ENCODE measurements at regions of chr20 and their contacts with region 1.

Region 1: GRCh38 chr20:44609511-44610312 is 27.3 kb downstream of the PKIG start:
- DNase-seq: peak; percentile 71 to 93 (median 87)
- ATAC-seq: peak; percentile 80
- H3K4me3 ChIP-seq: peak overlapping the region in 1 of 2 experiments; percentile 5
- H3K4me3 Mint-ChIP-seq: peak overlapping the region; percentile 53
- H3K27ac ChIP-seq: peak overlapping the region; percentile 69 to 83
- H3K27ac Mint-ChIP-seq: peak overlapping the region; percentile 98
- H3K4me1 ChIP-seq: peaks cover 48% of the 10 kb centered on the region
- H3K4me1 Mint-ChIP-seq: peaks cover 39% of the 10 kb centered on the region
- H3K27me3 ChIP-seq: no peaks in the 10 kb centered on the region
- H3K27me3 Mint-ChIP-seq: no peaks in the 10 kb centered on the region
- CTCF ChIP-seq: peak; percentile 92

Region 2: DNA sequence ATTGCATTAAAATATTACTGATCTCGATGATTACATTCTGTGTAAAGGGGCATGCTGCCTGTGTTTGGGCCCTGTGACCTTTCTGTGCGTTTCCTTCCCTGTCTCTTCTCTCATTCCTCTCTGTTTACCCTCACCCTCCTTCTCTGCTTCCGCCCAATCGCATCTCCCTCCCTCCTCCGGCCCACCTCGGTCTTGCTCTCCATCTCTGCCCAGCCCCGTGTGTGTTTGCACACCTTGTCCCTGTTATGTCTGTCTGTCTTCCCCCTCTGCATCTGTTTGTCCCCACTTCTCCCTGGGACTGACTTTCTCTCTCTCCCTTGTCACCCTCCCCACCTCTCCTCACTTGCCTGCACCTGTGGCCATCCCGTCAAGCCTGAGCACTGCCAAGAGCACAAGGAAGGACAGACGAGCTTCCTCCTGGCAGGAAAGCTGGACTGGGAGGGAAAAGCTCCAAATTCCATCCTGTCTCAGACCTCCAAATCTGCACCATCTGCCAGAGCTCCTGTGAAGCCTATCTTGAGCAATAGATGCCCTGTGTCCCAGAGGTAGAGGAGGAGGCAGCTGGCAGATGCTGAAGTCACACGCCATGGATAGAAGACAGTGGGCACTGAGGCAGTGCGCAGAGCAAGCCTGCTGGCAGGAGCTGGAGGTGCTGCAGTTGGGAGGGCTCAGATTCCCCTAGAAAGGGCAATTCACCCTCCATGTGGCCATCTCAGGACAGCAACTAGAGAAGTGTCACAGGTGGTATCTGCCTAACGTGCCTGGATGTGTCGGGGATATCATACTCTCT is 1592.3 kb before region 1 on chr20:
- CTCF ChIA-PET with region 1: no interaction called
- POLR2A ChIA-PET with region 1: no interaction called
- intact Hi-C with region 1: no loop called
- DNase-seq: no peak
- ATAC-seq: no peak
- H3K4me3 ChIP-seq: no peak overlapping the region
- H3K4me3 Mint-ChIP-seq: no peak overlapping the region
- H3K27ac ChIP-seq: no peak overlapping the region
- H3K27ac Mint-ChIP-seq: no peak overlapping the region
- H3K4me1 ChIP-seq: no peaks in the 10 kb centered on the region
- H3K4me1 Mint-ChIP-seq: no peaks in the 10 kb centered on the region
- H3K27me3 ChIP-seq: no peaks in the 10 kb centered on the region
- H3K27me3 Mint-ChIP-seq: peaks cover 4% of the 10 kb centered on the region
- CTCF ChIP-seq: no peak

Region 3: GRCh38 chr20:44382641-44383040 is 227.1 kb before region 1 on chr20:
- CTCF ChIA-PET with region 1: interaction called, 23 read pairs
- POLR2A ChIA-PET with region 1: interaction called, 3 read pairs
- intact Hi-C with region 1: loop called (anchors 1 kb)
- DNase-seq: no peak
- ATAC-seq: no peak
- H3K4me3 ChIP-seq: no peak overlapping the region
- H3K4me3 Mint-ChIP-seq: no peak overlapping the region
- H3K27ac ChIP-seq: no peak overlapping the region
- H3K27ac Mint-ChIP-seq: no peak overlapping the region
- H3K4me1 ChIP-seq: no peaks in the 10 kb centered on the region
- H3K4me1 Mint-ChIP-seq: peaks cover 1% of the 10 kb centered on the region
- H3K27me3 ChIP-seq: no peaks in the 10 kb centered on the region
- H3K27me3 Mint-ChIP-seq: peaks cover 15% of the 10 kb centered on the region
- CTCF ChIP-seq: no peak

Region 4: DNA sequence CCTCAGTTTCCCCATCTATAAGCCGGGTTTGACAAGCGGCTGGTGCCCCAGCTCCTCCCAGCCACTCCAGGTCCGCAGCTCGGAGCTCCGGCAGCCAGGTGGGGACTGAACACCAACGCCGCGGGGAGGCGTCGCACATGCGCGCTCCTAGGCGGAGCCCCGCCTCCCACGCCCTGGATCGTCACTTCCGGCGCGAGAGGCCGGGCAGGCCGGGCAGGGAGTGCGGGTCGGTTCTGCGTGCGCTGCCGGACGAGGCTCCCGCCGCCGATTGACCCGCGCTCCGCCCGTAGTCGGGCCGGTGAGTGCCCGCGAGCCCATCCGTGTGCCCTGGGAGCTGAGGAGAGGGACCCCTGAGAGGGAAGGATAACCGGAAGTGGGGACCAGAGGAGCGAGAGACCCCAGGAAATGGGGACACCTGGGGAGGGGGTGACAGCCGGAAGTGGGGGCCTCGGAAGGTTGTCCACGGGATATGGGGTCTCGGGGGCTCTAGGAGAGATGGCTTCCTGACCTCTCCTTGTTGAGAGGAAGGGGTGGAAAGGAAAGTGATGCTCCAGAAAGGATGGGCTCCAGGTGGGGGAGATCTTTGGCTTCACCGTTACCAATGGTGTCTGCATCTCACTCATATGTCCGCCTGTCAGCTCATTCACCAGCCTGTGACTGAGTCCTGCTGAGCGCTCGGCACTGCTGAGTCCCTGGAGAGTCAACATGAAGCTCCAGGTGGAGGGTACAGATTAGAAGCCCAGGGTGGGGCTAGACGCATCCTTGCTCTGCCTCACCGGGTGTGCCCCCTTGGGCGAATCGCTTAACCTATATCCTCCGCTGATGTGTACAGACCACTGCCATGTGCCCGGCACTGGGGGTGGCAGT is 133.8 kb before region 1 on chr20 and contains the start of gene TTPAL:
- CTCF ChIA-PET with region 1: interaction called, 3 read pairs
- POLR2A ChIA-PET with region 1: interaction called, 8 read pairs
- intact Hi-C with region 1: loop called (anchors 1 kb)
- DNase-seq: peak; percentile 72 to 95 (median 88)
- ATAC-seq: peak; percentile 96
- H3K4me3 ChIP-seq: peak within 1 kb of the TSS; percentile 82 to 90
- H3K4me3 Mint-ChIP-seq: peak within 1 kb of the TSS; percentile 86
- H3K27ac ChIP-seq: peak within 1 kb of the TSS; percentile 94 to 96
- H3K27ac Mint-ChIP-seq: peak within 1 kb of the TSS; percentile 95
- H3K4me1 ChIP-seq: peaks cover 16% of the 10 kb centered on the region
- H3K4me1 Mint-ChIP-seq: peaks cover 27% of the 10 kb centered on the region
- H3K27me3 ChIP-seq: no peaks in the 10 kb centered on the region
- H3K27me3 Mint-ChIP-seq: no peaks in the 10 kb centered on the region
- CTCF ChIP-seq: peak; percentile 26
- total RNA-seq, gene TTPAL: 12.3 TPM

Region 5: DNA sequence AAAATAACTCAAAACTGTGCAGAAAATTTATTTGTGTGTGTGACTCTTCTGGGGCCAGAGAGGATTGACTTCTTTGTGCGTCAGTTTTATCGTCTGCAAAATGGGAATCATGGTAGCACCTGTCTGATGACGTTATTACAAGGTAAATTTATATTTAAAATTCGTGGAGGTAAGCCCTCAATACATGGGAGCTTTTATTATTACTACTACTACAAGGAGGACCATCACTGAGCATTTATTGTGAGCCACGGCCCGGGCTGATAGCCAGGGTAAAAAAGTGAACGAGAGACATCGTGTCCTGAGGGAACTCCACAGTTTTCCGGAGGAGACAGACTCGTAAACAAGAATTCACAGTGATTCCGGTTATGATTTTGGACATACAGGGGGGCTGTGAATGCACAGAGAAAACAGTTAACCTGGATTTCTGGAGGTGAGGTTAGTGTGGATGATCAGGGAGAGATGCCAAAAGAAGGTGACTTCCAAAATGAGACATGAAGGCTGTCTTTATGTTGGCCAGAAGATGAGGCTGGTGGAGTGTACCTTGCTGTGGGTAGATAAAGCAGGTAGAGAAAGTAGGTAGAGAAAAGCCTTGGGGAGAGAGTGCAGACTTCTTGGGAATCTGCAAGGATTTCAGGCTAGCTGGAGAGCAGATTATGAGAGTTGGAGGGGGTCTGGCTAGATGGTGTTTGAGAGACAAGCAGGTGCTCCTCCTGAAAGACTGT is 77.3 kb before region 1 on chr20:
- CTCF ChIA-PET with region 1: interaction called, 5 read pairs
- POLR2A ChIA-PET with region 1: no interaction called
- intact Hi-C with region 1: loop called in 1 of 2 experiments (anchors 2 kb)
- DNase-seq: no peak
- ATAC-seq: peak; percentile 13
- H3K4me3 ChIP-seq: peak overlapping the region; percentile 53 to 69
- H3K4me3 Mint-ChIP-seq: no peak overlapping the region
- H3K27ac ChIP-seq: peak overlapping the region; percentile 31 to 66
- H3K27ac Mint-ChIP-seq: no peak overlapping the region
- H3K4me1 ChIP-seq: peaks cover 28% of the 10 kb centered on the region
- H3K4me1 Mint-ChIP-seq: peaks cover 7% of the 10 kb centered on the region
- H3K27me3 ChIP-seq: peaks cover 0 to 3% of the 10 kb centered on the region in 2 experiments
- H3K27me3 Mint-ChIP-seq: no peaks in the 10 kb centered on the region
- CTCF ChIP-seq: no peak

Region 6: DNA sequence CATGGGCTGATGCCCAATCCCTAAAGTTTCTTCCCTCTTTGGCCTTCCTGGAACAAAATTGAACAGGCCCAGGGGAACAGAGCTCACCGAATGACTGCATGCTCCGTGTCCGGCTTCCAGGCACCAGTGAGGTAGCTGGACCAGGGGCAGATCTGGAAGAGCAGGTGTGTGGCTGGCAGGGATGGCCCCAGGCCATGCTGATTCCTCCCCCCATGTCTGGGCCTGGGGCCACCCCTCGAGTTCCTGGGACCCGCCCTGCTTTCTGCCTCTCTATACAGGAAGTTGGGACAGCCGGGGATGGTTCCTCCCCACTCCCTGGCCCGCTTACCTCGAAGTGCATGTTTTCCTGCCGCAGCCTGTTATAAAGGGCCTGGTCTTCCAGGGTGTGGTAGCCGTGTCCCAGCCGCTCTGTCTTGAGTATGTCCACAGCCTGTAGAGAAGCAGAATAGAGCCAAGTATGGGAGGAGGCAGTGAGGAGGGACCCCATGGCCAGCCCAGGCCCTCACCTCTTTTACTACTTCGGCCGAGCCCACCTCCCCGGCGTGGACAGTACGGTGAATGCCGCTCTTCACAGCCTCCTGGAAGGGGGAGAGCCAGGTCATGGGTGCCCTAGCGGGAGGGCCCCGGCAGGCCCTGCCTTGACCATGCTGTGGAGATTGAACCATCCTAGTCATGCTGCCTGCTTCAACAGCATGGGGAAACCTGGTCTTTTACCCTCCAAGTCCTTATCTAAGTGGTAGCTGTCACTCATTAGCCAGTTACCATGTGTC is 13.0 kb after region 1 on chr20:
- CTCF ChIA-PET with region 1: interaction called, 14 read pairs
- POLR2A ChIA-PET with region 1: interaction called, 3 read pairs
- intact Hi-C with region 1: no loop called
- DNase-seq: no peak
- ATAC-seq: no peak
- H3K4me3 ChIP-seq: no peak overlapping the region
- H3K4me3 Mint-ChIP-seq: no peak overlapping the region
- H3K27ac ChIP-seq: no peak overlapping the region
- H3K27ac Mint-ChIP-seq: no peak overlapping the region
- H3K4me1 ChIP-seq: peaks cover 18% of the 10 kb centered on the region
- H3K4me1 Mint-ChIP-seq: peaks cover 28% of the 10 kb centered on the region
- H3K27me3 ChIP-seq: no peaks in the 10 kb centered on the region
- H3K27me3 Mint-ChIP-seq: no peaks in the 10 kb centered on the region
- CTCF ChIP-seq: no peak

Region 7: GRCh38 chr20:44642203-44643153 is 32.8 kb after region 1 on chr20:
- CTCF ChIA-PET with region 1: interaction called, 19 read pairs
- POLR2A ChIA-PET with region 1: interaction called, 4 read pairs
- intact Hi-C with region 1: loop called (anchors 1 to 2 kb)
- DNase-seq: peak in 7 of 9 experiments; percentile 20 to 74 (median 45)
- ATAC-seq: peak; percentile 27
- H3K4me3 ChIP-seq: peak overlapping the region; percentile 14 to 32
- H3K4me3 Mint-ChIP-seq: peak overlapping the region; percentile 51
- H3K27ac ChIP-seq: peak overlapping the region; percentile 51 to 93
- H3K27ac Mint-ChIP-seq: peak overlapping the region; percentile 93
- H3K4me1 ChIP-seq: peaks cover 65% of the 10 kb centered on the region
- H3K4me1 Mint-ChIP-seq: peaks cover 69% of the 10 kb centered on the region
- H3K27me3 ChIP-seq: no peaks in the 10 kb centered on the region
- H3K27me3 Mint-ChIP-seq: no peaks in the 10 kb centered on the region
- CTCF ChIP-seq: peak; percentile 44